Left cardiac atrium (tissue), 4 donors: ENCODE measurements at regions of chr20 and their contacts with region 1.

Region 1: GRCh38 chr20:53828682-53829254 is 235.1 kb upstream of the ZNF217 start:
- DNase-seq: no peak
- ATAC-seq: peak; percentile 67 to 89

Region 2: DNA sequence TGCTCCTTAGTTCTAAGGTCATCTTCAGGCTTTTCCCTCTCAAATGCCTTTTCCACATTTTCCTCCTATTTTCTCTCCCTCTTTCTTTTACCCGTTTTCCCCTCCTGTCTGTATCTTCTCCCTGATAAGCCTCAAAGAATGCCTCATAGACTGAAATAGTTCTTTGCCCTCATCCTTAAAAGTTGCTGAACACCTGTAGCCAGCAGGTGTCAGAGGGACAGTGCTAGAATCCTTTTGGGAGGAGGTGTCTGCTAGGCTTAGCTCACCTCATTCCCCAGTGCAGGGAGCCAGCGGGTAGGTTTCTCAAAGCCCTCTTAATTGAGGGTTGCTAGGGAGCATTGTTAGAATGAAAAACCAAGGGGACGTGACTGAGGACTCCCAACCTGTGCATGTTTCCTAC is 652.6 kb before region 1 on chr20:
- intact Hi-C with region 1: no loop called
- DNase-seq: no peak
- ATAC-seq: no peak

Region 3: DNA sequence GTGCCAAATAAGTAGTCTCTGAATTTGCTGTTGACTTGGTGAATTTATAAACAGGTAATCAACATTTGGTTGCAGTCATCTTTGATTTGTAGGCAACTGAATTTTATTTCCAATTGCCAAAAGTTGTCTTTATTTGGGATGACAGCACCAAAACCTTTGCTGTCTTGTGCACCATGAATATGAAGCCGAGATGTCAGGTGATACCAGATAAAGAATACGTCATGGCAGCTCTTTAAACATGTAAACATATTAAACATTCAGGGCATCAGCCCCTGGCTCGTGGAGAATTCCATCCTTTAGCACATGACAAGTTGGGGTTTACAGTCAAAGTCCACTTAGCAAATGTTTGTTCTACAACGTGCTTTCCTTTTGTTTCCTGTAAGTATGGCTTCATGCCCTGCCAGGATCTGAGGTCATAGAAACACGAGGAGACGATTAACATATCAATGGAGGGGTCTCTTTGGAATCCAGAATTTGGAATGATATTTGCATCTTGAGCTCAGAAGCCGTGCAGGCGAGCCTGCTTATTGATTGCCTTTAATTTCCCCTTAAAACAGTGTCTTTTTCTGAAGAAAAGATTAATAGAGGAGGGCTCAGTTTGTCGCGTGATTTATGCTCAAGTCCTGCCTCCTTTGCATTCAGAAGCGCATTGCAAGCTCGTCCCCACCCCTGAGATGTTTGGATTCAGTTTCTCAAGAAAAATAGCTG is 64.9 kb before region 1 on chr20:
- intact Hi-C with region 1: loop called in 1 of 2 experiments (anchors 10 kb)
- DNase-seq: no peak
- ATAC-seq: no peak

Region 4: GRCh38 chr20:53869466-53870258 is 40.9 kb after region 1 on chr20:
- intact Hi-C with region 1: loop called in 1 of 2 experiments (anchors 2 kb)
- DNase-seq: peak; percentile 56
- ATAC-seq: peak; percentile 88 to 90

Region 5: GRCh38 chr20:53899351-53900167 is 70.8 kb after region 1 on chr20:
- intact Hi-C with region 1: loop called in 1 of 2 experiments (anchors 10 kb)
- DNase-seq: no peak
- ATAC-seq: peak; percentile 47 to 80

Region 6: DNA sequence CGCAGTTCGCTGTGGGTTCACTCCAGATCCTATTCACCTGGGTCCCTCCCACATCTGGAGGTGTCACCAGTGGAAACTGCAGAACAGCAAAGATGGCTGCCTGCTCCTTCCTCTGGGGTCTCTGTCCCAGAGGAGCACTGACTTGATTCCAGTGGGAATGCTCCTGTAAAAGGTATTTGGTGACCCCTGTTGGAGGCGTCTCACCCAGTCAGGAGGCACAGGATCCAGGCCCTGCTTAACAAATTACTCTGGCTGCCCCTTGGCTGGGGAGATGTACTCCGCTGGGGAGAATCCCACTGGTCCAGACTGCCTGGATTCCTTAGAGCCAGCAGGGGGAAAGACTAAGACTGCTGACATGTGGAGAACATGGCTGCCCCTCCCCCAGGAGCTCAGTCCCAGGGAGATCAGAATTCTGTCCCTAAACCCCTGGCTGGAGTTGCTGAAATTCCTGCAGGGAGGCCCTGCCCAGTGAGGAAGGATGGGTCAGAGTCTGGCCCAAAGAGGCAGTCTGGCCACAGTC is 1693.6 kb after region 1 on chr20:
- intact Hi-C with region 1: no loop called
- DNase-seq: no peak
- ATAC-seq: no peak